Heart right ventricle (tissue), 16 donors: ENCODE measurements at regions of chr4 and their contacts with region 1.

Region 1: GRCh38 chr4:113394730-113395530 is 345.5 kb downstream of the ANK2 start:
- DNase-seq: peak in 1 of 2 donors; percentile 80
- ATAC-seq: peak; percentile 92 to 97 (median 95)
- H3K4me3 ChIP-seq: no peak overlapping the region
- H3K27ac ChIP-seq: peak overlapping the region in 1 of 10 donors; percentile 23
- H3K4me1 ChIP-seq: peaks cover 0 to 17% (median 3%) of the 10 kb centered on the region in 9 donors
- H3K27me3 ChIP-seq: no peaks in the 10 kb centered on the region
- CTCF ChIP-seq: peak; percentile 80 to 91 (median 88)

Region 2: GRCh38 chr4:113539408-113539807 is 144.5 kb after region 1 on chr4:
- intact Hi-C with region 1: loop called in 3 of 10 experiments (anchors 5 to 10 kb)
- DNase-seq: no peak
- ATAC-seq: no peak
- H3K4me3 ChIP-seq: no peak overlapping the region
- H3K27ac ChIP-seq: peak overlapping the region in 6 of 10 donors; percentile 14 to 83 (median 78)
- H3K4me1 ChIP-seq: peaks cover 3 to 74% (median 44%) of the 10 kb centered on the region in 9 donors
- H3K27me3 ChIP-seq: no peaks in the 10 kb centered on the region
- CTCF ChIP-seq: no peak

Region 3: DNA sequence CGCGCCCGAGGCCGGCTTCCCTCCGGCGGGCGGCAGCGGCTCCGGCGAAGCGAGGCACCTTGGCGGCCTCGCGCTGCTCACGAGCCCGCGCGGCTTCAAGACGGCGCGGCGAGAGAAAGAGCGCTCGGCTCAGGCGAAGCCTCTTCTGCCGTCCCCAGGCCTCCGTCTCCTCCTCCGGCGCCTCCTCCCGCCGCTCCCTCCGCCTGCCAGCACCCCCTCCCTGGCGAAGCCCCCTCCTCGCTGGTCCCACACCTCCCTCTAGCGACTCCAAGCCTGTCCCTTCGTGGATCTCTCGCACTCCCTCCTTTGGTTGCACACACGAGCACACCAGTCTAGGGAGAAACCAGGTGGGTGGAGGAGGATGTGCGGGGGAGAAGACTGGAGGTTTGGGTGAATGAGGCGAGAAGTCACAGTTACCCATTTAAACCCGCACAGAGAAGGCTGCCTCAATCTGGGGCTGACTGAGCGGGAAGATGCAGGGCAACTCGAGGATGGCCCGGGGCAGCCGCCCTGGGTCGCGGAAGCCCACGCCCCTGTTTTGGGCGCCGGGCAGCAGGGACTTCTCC is 366.8 kb after region 1 on chr4 and contains the start of gene CAMK2D:
- intact Hi-C with region 1: loop called in 9 of 10 experiments (anchors 2 to 10 kb)
- DNase-seq: peak; percentile 88 to 91
- ATAC-seq: peak; percentile 74 to 90 (median 82)
- H3K4me3 ChIP-seq: peak within 1 kb of the TSS; percentile 70 to 89 (median 85)
- H3K27ac ChIP-seq: peak within 1 kb of the TSS; percentile 95 to 100 (median 98)
- H3K4me1 ChIP-seq: peaks cover 0 to 41% (median 32%) of the 10 kb centered on the region in 9 donors
- H3K27me3 ChIP-seq: no peaks in the 10 kb centered on the region
- CTCF ChIP-seq: peak; percentile 11 to 81 (median 63)
- total RNA-seq, gene CAMK2D: 173 to 286 (median 249) TPM

Region 4: GRCh38 chr4:113901994-113902787 is 507.3 kb after region 1 on chr4:
- intact Hi-C with region 1: loop called in 3 of 10 experiments (anchors 5 to 10 kb)
- DNase-seq: no peak
- ATAC-seq: no peak
- H3K4me3 ChIP-seq: no peak overlapping the region
- H3K27ac ChIP-seq: peak overlapping the region in 1 of 10 donors; percentile 24
- H3K4me1 ChIP-seq: peaks cover 0 to 8% (median 0%) of the 10 kb centered on the region in 9 donors
- H3K27me3 ChIP-seq: no peaks in the 10 kb centered on the region
- CTCF ChIP-seq: peak in 1 of 9 donors; percentile 15

Region 5: GRCh38 chr4:113969709-113970334 is 574.9 kb after region 1 on chr4:
- intact Hi-C with region 1: no loop called
- DNase-seq: no peak
- ATAC-seq: no peak
- H3K4me3 ChIP-seq: no peak overlapping the region
- H3K27ac ChIP-seq: no peak overlapping the region
- H3K4me1 ChIP-seq: no peaks in the 10 kb centered on the region
- H3K27me3 ChIP-seq: no peaks in the 10 kb centered on the region
- CTCF ChIP-seq: no peak

Region 6: DNA sequence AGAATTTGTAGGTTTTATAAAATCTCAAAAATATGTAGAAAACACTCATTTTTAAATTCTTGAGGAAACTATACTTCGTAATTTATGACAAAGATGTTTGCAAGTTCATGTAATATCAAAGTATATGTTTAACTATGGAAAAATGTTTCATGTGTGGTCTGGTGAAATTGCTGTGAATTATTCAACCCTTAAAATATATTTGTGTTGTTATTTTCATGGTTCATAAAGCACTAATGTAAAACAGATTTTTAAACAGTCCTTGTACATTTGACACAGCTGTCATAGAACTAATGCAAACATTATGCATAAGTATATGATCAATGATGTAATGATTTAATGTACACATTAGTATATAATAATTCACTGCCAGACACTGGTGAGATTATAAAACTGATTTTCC is 667.6 kb after region 1 on chr4:
- intact Hi-C with region 1: loop called in 1 of 10 experiments (anchors 10 kb)
- DNase-seq: no peak
- ATAC-seq: no peak
- H3K4me3 ChIP-seq: no peak overlapping the region
- H3K27ac ChIP-seq: no peak overlapping the region
- H3K4me1 ChIP-seq: no peaks in the 10 kb centered on the region
- H3K27me3 ChIP-seq: no peaks in the 10 kb centered on the region
- CTCF ChIP-seq: no peak

Region 7: GRCh38 chr4:114180481-114180880 is 785.6 kb after region 1 on chr4:
- intact Hi-C with region 1: loop called in 1 of 10 experiments (anchors 10 kb)
- DNase-seq: peak; percentile 6 to 17
- ATAC-seq: no peak
- H3K4me3 ChIP-seq: no peak overlapping the region
- H3K27ac ChIP-seq: no peak overlapping the region
- H3K4me1 ChIP-seq: peaks cover 0 to 8% (median 0%) of the 10 kb centered on the region in 9 donors
- H3K27me3 ChIP-seq: no peaks in the 10 kb centered on the region
- CTCF ChIP-seq: peak in 7 of 9 donors; percentile 4 to 51 (median 43)

Region 8: GRCh38 chr4:114386637-114387233 is 991.8 kb after region 1 on chr4:
- intact Hi-C with region 1: loop called in 3 of 10 experiments (anchors 10 kb)
- DNase-seq: no peak
- ATAC-seq: no peak
- H3K4me3 ChIP-seq: no peak overlapping the region
- H3K27ac ChIP-seq: no peak overlapping the region
- H3K4me1 ChIP-seq: no peaks in the 10 kb centered on the region
- H3K27me3 ChIP-seq: peaks cover 0 to 5% (median 0%) of the 10 kb centered on the region in 7 donors
- CTCF ChIP-seq: peak; percentile 32 to 74 (median 65)

Region 9: GRCh38 chr4:114435116-114435515 is 1040.2 kb after region 1 on chr4:
- intact Hi-C with region 1: no loop called
- DNase-seq: no peak
- ATAC-seq: no peak
- H3K4me3 ChIP-seq: no peak overlapping the region
- H3K27ac ChIP-seq: no peak overlapping the region
- H3K4me1 ChIP-seq: no peaks in the 10 kb centered on the region
- H3K27me3 ChIP-seq: peaks cover 0 to 4% (median 0%) of the 10 kb centered on the region in 7 donors
- CTCF ChIP-seq: no peak